ENCODE measurements at regions of chr11 and their contacts with region 1.

Region 1: DNA sequence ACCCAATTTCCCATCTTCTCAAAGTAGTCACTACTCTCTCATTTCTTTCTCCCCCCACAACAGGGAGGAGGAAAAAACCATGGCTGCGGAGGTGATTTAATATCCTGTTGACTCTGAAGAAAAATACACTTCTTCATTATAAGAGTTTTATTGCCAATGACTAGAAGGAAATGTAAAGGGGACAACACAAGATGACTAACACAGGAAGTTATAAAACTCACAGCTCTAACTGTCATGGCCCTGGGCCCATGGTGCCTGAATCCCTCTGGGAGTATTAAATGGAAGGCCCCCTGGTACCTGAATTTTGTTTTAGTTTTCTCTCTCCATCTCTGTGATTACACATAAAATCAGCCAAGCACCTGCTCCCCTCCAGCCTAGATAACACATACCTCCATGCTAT is 352.8 kb upstream of the FAT3 start:
- DNase-seq: peak; percentile 89
- H3K4me3 ChIP-seq: no peak overlapping the region
- H3K27ac ChIP-seq: peak overlapping the region; percentile 83
- H3K4me1 ChIP-seq: peaks cover 26% of the 10 kb centered on the region
- H3K27me3 ChIP-seq: no peaks in the 10 kb centered on the region
- CTCF ChIP-seq: no peak
- POLR2A ChIP-seq: no peak

Region 2: GRCh38 chr11:91625495-91625894 is 246.3 kb before region 1 on chr11:
- CTCF ChIA-PET with region 1: no interaction called
- POLR2A ChIA-PET with region 1: no interaction called
- dilution Hi-C with region 1: no loop called
- intact Hi-C with region 1: loop called (anchors 1 kb)
- DNase-seq: peak; percentile 92
- H3K4me3 ChIP-seq: peak overlapping the region in 1 of 3 experiments; percentile 45
- H3K27ac ChIP-seq: no peak overlapping the region
- H3K4me1 ChIP-seq: no peaks in the 10 kb centered on the region
- H3K27me3 ChIP-seq: no peaks in the 10 kb centered on the region
- CTCF ChIP-seq: no peak
- POLR2A ChIP-seq: no peak